GM10248 (cell line): ENCODE measurements at regions of chr12 and their contacts with region 1.

Region 1: DNA sequence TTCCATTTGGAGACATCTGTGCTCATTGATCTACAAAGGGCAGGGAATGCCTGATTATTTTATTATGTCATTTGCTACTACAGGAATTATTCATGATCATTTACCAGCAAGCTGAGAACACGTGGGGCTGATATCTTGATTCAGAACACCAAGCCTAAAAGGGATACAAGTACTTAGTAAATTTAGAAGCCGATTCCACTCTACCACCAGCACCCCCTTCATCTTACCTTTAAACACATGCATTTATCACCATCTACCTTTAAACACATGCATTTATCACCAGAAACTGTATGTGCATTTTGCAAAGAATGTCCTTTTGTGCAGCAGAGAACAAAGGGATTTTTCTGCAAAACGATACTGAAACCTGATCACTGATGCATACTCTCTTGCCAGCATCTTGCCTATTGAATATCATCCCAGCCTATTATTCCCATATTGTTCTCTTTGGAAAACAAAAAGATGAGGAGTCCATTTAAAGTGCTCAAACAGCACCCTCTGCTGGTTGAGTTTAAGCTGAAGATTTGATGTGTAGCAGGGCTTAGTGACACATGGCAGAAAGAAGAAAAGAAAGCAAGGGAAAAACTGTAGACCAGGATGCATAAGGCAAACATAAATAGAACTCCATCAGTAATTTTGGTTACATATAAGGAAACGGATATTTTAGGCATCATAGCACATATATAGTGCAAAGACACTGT is 132.6 kb upstream of the PLEKHG7 start:
- DNase-seq: peak; percentile 47
- CTCF ChIP-seq: peak; percentile 73

Region 2: GRCh38 chr12:92151916-92152315 is 418.3 kb before region 1 on chr12:
- CTCF ChIA-PET with region 1: interaction called, 10 read pairs
- POLR2A ChIA-PET with region 1: no interaction called
- DNase-seq: no peak
- CTCF ChIP-seq: no peak

Region 3: GRCh38 chr12:92363295-92364146 is 206.7 kb before region 1 on chr12:
- CTCF ChIA-PET with region 1: interaction called, 15 read pairs
- POLR2A ChIA-PET with region 1: no interaction called
- DNase-seq: peak; percentile 61
- CTCF ChIP-seq: no peak